ENCODE measurements at regions of chr3 and their contacts with region 1.

Region 1: DNA sequence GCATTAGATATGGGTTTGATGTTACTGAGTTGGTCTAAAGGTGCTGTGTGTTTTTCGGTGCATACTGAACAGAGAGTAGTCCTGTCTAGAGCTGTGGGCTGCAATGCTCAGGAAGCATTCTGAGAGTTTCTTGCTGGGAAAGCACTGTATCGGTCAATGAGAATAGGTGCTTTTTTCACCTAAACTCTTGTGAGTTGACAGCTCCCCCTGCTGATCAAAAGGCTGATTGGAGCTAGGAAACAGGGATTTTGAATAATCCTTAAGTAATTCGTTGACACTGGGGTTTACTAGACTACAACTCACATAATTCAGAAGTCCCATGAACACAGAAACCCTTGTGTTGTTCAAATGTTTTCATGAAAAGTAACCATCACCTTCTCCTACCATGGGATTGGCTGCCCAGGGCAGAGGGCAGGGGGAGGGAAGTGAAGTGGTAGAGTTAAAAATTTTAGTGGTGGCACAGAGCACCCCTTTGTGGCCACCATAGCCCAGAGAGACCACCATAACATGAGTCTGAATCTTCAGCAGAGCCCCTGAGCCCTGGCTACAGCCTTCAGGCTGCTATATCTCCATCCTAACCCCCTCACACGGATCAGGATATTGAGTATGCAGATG is 13.0 kb upstream of the MANF start:
- DNase-seq: peak; percentile 90
- H3K4me3 Mint-ChIP-seq: no peak overlapping the region
- H3K27ac Mint-ChIP-seq: no peak overlapping the region
- H3K4me1 Mint-ChIP-seq: peaks cover 2% of the 10 kb centered on the region
- H3K27me3 Mint-ChIP-seq: no peaks in the 10 kb centered on the region

Region 2: GRCh38 chr3:50674349-50675178 is 697.5 kb before region 1 on chr3 and contains the start of gene DOCK3:
- intact Hi-C with region 1: loop called (anchors 5 kb)
- DNase-seq: peak; percentile 92
- H3K4me3 Mint-ChIP-seq: peak within 1 kb of the TSS; percentile 76
- H3K27ac Mint-ChIP-seq: peak within 1 kb of the TSS; percentile 40
- H3K4me1 Mint-ChIP-seq: peaks cover 10% of the 10 kb centered on the region
- H3K27me3 Mint-ChIP-seq: peaks cover 58% of the 10 kb centered on the region
- total RNA-seq, gene DOCK3: 1.7 and 1.8 TPM in 2 replicates

Region 3: DNA sequence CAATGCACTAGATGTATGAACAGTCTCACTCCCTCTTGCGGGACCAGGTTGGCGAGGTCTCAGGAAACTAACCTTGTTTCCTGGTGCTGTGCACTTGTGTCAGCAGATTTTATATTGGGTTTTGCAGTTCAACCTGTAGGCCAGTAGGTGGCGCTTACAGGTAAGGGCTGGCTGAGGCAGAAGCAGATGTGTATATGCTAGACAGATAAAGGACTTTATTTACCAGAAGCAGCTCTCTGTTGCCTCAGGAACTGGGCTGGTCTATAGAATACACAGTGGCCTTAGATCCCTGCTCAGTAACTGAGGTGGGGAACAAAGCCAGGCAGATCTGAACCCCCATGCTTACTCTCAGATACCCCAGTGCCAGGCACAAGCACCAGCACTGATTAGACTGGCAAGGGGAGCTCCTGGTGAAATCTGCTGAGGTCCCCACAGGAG is 400.5 kb before region 1 on chr3:
- intact Hi-C with region 1: loop called (anchors 2 kb)
- DNase-seq: peak; percentile 89
- H3K4me3 Mint-ChIP-seq: no peak overlapping the region
- H3K27ac Mint-ChIP-seq: no peak overlapping the region
- H3K4me1 Mint-ChIP-seq: peaks cover 12% of the 10 kb centered on the region
- H3K27me3 Mint-ChIP-seq: peaks cover 3% of the 10 kb centered on the region